Activated CD4-positive, alpha-beta T cell treated with anti-CD3 and anti-CD28 coated beads, Interleukin-2, amount 10 ng/mL, durations not matched to agents 24 days and 14 days (primary cell): ENCODE measurements at regions of chr5 and their contacts with region 1.

Region 1: DNA sequence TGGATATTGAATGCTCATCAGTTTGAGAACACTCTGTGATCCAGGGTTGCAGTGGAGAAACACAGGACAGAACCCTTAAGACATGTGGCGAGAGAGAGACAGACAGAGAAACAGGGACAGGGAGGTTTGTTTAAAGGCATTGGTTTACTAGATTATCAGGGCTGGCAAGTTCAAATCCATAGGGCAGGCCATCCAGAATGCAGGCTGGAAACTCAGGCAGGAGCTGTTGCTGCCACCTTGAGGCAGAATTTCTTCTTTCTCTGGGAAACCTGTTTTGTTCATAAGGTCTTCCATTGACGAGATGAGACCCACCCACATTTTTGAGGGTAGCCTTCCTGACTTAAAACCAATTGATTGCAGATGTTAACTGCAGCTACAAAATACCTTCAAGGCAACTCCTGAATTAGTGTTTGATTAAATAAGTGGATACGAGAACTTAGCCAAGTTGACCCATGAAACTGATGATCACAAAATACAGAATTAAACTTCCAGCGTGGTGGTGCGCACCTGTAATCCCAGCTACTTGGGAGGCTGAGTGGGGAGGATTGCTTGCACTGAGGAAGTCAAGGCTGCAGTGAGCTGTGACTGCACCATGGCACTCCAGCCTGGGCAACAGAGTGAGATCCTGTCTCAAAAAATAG is 55.9 kb downstream of the NSUN2 start:
- DNase-seq: peak; percentile 75
- H3K4me3 Mint-ChIP-seq: no peak overlapping the region
- H3K27ac Mint-ChIP-seq: no peak overlapping the region
- H3K4me1 Mint-ChIP-seq: no peaks in the 10 kb centered on the region
- H3K27me3 Mint-ChIP-seq: peaks cover 22% of the 10 kb centered on the region

Region 2: DNA sequence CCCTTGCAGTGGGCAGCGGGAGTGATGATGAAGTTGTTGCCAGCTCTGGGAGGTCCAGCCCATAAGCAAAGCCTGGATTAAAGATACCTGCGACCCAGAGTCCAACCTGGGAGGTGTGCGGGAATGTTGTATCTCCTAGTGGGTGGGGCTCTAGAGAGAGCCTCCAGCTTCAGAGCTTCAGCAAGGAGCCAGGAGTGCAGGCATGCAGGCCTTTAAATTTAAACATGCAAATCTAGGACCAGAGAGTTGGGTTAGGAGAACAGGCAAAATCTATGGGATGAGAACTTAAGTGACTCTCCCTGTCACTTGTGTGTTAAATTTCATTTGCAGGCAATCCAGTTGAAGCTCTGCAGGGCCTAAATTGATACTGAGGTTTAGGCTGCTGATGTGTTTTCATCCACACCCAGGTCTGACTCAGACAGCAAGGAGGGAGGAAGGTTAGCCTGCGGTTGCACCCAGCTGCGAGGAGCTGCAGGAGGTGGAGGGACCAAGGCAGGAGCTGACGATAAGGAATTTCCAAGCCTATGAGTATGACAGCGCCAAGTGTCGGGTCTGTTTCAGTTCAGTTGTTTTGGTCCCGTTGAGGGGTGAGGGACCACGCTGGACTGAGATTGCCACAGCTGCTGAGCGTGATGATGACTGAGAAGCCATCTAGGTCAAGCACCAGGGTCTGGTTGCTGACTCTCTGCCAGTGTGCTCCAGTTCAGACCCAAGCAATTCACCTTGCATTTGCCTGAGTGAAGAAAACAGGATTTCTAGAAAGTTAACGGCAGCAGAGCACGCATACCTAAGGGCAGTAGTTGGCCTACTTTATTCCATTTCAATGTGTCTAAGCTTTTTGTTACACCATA is 911.5 kb before region 1 on chr5:
- intact Hi-C with region 1: no loop called
- DNase-seq: no peak
- H3K4me3 Mint-ChIP-seq: no peak overlapping the region
- H3K27ac Mint-ChIP-seq: peak overlapping the region; percentile 49
- H3K4me1 Mint-ChIP-seq: no peaks in the 10 kb centered on the region
- H3K27me3 Mint-ChIP-seq: peaks cover 2% of the 10 kb centered on the region

Region 3: GRCh38 chr5:5886812-5887486 is 690.0 kb before region 1 on chr5:
- intact Hi-C with region 1: loop called (anchors 2 kb)
- DNase-seq: peak; percentile 89
- H3K4me3 Mint-ChIP-seq: no peak overlapping the region
- H3K27ac Mint-ChIP-seq: no peak overlapping the region
- H3K4me1 Mint-ChIP-seq: no peaks in the 10 kb centered on the region
- H3K27me3 Mint-ChIP-seq: peaks cover 2% of the 10 kb centered on the region

Region 4: GRCh38 chr5:6291961-6292360 is 285.0 kb before region 1 on chr5:
- intact Hi-C with region 1: loop called (anchors 5 kb)
- DNase-seq: peak; percentile 67
- H3K4me3 Mint-ChIP-seq: no peak overlapping the region
- H3K27ac Mint-ChIP-seq: no peak overlapping the region
- H3K4me1 Mint-ChIP-seq: no peaks in the 10 kb centered on the region
- H3K27me3 Mint-ChIP-seq: peaks cover 22% of the 10 kb centered on the region

Region 5: DNA sequence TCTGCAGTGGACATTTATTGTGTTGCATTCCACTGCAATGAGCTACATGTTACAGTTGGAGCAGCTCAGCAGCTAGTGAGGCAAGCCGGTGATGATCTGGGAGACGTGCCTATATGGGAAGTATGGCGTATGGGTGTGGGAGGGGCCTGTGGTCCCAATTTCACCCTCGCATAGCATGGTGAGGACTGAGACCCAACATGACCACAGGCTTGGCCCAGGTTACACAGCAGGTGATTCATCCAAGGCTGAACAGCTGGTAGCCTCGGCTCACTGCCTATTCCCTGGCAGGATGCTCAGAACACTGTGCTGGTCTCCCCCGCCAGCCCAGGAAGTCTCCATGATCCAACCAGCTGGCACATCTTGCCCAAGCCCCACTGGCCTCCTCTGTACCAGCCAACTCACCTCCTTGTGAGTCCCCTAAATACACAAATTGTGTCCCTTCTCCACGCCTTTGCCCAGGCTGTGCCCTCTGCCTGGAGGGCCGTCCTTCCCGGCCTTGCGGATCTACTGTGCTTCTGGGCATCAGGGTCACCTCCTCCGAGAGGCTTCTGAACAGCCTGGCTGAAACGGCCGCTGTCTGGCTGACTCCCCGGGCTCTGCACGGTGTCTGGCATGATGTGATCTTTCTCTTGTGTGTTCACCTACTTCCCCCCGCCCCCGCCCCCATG is 25.6 kb before region 1 on chr5:
- intact Hi-C with region 1: no loop called
- DNase-seq: no peak
- H3K4me3 Mint-ChIP-seq: no peak overlapping the region
- H3K27ac Mint-ChIP-seq: no peak overlapping the region
- H3K4me1 Mint-ChIP-seq: peaks cover 2% of the 10 kb centered on the region
- H3K27me3 Mint-ChIP-seq: peaks cover 3% of the 10 kb centered on the region